Left colon (tissue), 2 donors: ENCODE measurements at regions of chr17 and their contacts with region 1.

Region 1: DNA sequence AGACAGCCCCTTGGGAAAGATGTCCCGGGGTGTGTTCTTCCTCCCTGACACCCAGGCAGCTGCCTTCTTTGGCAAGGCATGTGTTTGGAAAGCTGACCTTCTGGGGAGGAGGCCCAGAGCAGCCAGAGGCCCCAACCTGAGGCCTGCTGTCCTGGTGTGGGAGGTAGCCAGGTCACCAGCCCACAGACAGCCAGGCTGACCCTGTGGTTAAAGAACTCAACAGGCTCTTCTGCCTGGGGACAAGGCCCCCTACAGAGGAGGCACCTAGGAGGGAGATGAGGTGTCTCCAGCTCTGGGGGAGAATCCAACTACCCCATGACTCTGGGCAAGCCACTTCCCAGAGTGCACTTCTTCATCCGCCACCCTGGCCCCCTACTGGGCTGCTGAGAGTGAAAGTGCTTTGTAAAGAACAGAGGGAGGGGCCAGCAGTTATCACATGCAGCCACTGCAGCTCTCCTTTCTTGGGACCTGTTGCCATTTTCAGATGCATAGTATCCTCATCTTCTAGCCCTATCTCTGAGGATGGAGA is 13.1 kb upstream of the SREBF1 start:
- DNase-seq: no peak
- ATAC-seq: peak; percentile 6

Region 2: DNA sequence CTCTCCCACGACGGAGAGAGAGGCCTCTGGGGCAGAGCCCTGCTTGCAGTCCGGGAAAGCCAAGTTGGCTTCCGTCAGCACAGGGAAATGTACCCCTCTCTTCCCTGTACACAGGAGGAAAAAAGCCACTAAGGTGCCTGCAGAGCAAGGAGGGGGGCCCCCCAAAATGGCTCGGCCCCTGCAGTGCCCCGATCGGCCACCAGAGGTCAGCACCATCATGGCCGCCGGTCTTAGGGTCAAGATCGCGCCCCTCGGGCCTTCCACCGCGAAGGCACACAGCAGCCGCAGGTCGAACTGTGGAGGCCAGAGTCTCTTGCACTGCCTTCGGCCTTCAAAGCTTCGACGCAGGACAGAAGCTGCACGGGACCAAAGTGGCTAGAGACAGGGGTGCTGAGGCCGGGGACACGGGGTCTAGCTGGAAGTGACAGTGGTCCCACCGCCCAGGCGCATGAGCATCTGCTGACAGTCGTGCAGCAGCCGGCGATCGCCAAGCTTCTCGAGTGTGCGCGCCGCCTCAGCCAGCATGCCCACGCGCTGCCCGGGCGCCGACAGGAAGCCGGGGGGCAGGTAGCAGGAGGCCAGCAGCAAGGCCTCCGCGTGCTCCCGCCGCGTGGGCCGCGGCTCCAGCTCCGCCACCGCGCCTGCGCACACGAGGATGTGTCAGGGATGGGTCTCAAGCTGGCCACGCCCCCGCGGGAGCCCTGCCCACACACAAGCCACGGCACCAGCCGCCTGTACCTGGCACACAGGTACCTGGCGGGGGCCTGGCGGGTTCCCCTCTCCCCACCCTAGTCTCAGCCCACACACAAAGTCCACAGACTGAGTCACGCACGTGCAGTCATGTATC is 37.5 kb before region 1 on chr17:
- intact Hi-C with region 1: loop called in 1 of 2 experiments (anchors 5 kb)
- DNase-seq: peak in 1 of 2 donors; percentile 72
- ATAC-seq: peak; percentile 39

Region 3: GRCh38 chr17:17935321-17936271 is 85.7 kb after region 1 on chr17:
- intact Hi-C with region 1: no loop called
- DNase-seq: peak; percentile 34 to 66
- ATAC-seq: peak; percentile 83

Region 4: GRCh38 chr17:18889658-18890057 is 1039.7 kb after region 1 on chr17:
- intact Hi-C with region 1: no loop called
- DNase-seq: no peak
- ATAC-seq: no peak